A673 (cell line): ENCODE measurements at regions of chr19 and their contacts with region 1.

Region 1: DNA sequence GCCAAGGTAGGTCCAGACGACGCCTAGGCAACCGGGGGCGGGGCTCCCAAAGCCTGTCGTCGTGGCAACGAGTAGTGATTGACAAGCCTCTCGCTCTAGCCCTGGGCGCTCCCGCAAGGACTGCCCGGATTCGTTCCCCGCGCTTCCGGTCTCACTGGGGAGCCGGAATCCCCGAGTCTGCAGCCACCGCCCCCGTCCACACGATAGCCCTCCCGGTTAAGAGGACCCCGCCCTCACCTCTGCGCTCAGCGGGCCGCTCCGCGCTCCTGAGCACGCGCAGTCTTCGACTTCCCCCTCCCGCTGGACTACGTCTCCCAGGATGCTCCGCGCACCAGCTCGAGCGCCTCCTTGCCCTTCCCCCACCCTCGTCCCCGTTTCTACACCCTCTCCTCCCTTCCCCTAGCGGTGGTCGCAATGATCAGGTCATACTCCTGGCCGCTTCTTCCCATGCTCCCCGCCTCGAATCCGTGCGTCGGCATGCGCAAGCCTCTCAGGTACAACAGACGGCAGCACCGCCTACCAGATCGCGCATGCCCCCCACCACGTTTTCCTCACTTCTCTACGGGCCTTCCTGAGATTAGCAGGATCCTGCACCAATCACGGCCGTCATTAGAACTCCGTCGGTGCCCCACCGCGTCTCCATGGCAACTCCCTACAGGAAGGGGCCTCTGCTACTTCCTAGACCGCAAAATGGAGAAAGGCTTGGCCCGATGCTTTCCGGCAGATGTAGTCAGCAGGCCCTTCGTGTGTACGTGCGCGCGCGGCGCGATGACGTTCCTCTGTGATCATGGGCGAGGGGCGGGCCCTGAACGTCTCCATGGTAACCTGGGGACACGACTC is at the start of gene MZF1:
- DNase-seq: peak; percentile 100
- H3K4me3 ChIP-seq: peak within 1 kb of the TSS; percentile 52
- H3K27ac ChIP-seq: peak within 1 kb of the TSS; percentile 96
- H3K4me1 ChIP-seq: peaks cover 10% of the 10 kb centered on the region
- H3K27me3 ChIP-seq: no peaks in the 10 kb centered on the region
- CTCF ChIP-seq: peak; percentile 26; the same call in 1 of the 2 replicates
- total RNA-seq, gene MZF1: 18.2 and 20.3 TPM in 2 replicates

Region 2: GRCh38 chr19:58451358-58452101 is 121.5 kb before region 1 on chr19 and contains the start of gene ZNF324B:
- CTCF ChIA-PET with region 1: no interaction called
- POLR2A ChIA-PET with region 1: interaction called, 13 read pairs
- intact Hi-C with region 1: no loop called
- DNase-seq: peak; percentile 99
- H3K4me3 ChIP-seq: peak within 1 kb of the TSS; percentile 81
- H3K27ac ChIP-seq: peak within 1 kb of the TSS; percentile 39
- H3K4me1 ChIP-seq: no peaks in the 10 kb centered on the region
- H3K27me3 ChIP-seq: no peaks in the 10 kb centered on the region
- CTCF ChIP-seq: no peak
- total RNA-seq, gene ZNF324B: 6.8 and 7.9 TPM in 2 replicates

Region 3: DNA sequence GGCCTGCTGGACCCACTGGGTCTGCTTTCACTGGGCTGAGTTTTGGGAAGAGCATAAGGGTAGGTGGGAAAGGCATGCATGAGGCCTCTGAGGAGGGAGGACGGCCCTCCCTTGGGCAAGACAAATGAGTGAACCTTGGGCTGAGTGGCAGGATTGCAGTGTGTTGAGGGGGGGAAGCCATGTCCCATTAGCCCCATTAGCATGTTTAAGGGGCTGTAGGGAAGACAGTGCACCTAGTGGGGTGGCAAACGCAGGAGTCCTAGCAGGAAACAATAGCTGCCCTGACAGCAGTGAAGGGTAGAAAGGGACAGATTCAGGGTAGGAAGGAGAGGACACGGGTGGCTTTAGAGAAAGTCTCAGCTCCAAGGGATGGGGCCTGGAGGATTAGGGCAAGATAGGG is 50.3 kb before region 1 on chr19:
- CTCF ChIA-PET with region 1: no interaction called
- POLR2A ChIA-PET with region 1: interaction called, 18 read pairs
- intact Hi-C with region 1: no loop called
- DNase-seq: no peak
- H3K4me3 ChIP-seq: no peak overlapping the region
- H3K27ac ChIP-seq: no peak overlapping the region
- H3K4me1 ChIP-seq: peaks cover 8% of the 10 kb centered on the region
- H3K27me3 ChIP-seq: no peaks in the 10 kb centered on the region
- CTCF ChIP-seq: no peak

Region 4: GRCh38 chr19:58543826-58544590 is 29.0 kb before region 1 on chr19 and contains the start of gene TRIM28:
- CTCF ChIA-PET with region 1: no interaction called
- POLR2A ChIA-PET with region 1: interaction called, 10 read pairs
- intact Hi-C with region 1: no loop called
- DNase-seq: peak; percentile 100
- H3K4me3 ChIP-seq: peak within 1 kb of the TSS; percentile 100
- H3K27ac ChIP-seq: peak within 1 kb of the TSS; percentile 85
- H3K4me1 ChIP-seq: peaks cover 13% of the 10 kb centered on the region
- H3K27me3 ChIP-seq: no peaks in the 10 kb centered on the region
- CTCF ChIP-seq: no peak
- total RNA-seq, gene TRIM28: 985 and 1,038 TPM in 2 replicates